ENCODE measurements at regions of chr1 and their contacts with region 1.

Region 1: DNA sequence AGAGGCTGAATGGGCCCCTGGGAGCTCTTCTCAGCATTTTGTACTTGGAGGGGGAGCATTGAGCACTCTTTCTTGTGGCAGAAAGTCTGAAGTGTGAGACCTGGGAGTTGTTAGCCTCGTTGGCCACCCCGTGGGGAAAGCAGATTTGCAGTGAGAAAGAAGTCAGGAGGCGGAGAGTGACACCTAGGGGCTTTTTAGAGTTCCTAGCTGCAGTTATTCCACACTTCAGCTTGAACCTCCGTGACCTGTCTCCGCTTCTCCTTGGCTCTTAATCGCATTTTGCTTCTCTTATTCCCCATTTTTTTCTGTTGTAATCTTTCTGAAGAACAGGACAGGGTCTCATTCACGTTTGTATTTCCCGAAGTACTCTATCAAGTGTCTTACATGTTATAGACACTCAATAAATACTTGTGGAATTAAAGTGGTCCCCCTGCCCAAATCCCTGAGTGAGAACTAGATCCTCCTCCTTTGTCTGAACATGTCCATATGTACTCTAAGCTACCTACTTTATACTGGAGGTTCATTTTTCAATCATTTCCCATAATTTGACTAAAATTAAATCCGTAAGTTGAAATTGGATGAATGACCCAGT is 14.5 kb upstream of the C1orf141 start:
- DNase-seq: peak; percentile 16 to 81 (median 62)
- ATAC-seq: peak; percentile 90
- H3K4me3 ChIP-seq: no peak overlapping the region
- H3K4me3 Mint-ChIP-seq: no peak overlapping the region
- H3K27ac ChIP-seq: no peak overlapping the region
- H3K27ac Mint-ChIP-seq: no peak overlapping the region
- H3K4me1 ChIP-seq: peaks cover 6% of the 10 kb centered on the region
- H3K4me1 Mint-ChIP-seq: peaks cover 23% of the 10 kb centered on the region
- H3K27me3 ChIP-seq: no peaks in the 10 kb centered on the region
- H3K27me3 Mint-ChIP-seq: peaks cover 7% of the 10 kb centered on the region
- CTCF ChIP-seq: peak; percentile 85

Region 2: DNA sequence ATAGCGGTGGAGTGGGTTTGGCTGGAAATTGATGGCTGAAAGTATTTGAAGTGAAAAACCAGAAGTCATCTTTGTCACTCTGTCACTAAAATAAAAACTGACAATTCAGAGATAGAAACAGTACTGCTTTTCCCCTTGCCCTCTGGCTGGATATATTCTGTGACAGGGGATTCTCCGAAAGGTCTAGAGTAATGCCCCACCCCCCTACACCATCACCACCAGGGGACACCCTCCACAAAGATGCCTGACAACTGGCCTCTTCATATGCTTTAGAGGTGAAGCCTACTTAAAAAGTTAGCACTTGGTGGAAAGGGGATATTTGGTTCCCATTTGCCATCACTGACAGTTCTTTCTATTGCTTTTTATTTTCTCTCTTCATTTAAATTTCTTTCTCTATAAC is 541.8 kb before region 1 on chr1:
- CTCF ChIA-PET with region 1: no interaction called
- POLR2A ChIA-PET with region 1: no interaction called
- intact Hi-C with region 1: no loop called
- DNase-seq: no peak
- ATAC-seq: no peak
- H3K4me3 ChIP-seq: no peak overlapping the region
- H3K4me3 Mint-ChIP-seq: no peak overlapping the region
- H3K27ac ChIP-seq: no peak overlapping the region
- H3K27ac Mint-ChIP-seq: no peak overlapping the region
- H3K4me1 ChIP-seq: no peaks in the 10 kb centered on the region
- H3K4me1 Mint-ChIP-seq: no peaks in the 10 kb centered on the region
- H3K27me3 ChIP-seq: no peaks in the 10 kb centered on the region
- H3K27me3 Mint-ChIP-seq: no peaks in the 10 kb centered on the region
- CTCF ChIP-seq: no peak

Region 3: GRCh38 chr1:66764994-66765578 is 384.2 kb before region 1 on chr1:
- CTCF ChIA-PET with region 1: interaction called, 90 read pairs
- POLR2A ChIA-PET with region 1: interaction called, 5 read pairs
- intact Hi-C with region 1: loop called (anchors 1 kb)
- DNase-seq: peak; percentile 5 to 73 (median 53)
- ATAC-seq: peak; percentile 83
- H3K4me3 ChIP-seq: no peak overlapping the region
- H3K4me3 Mint-ChIP-seq: no peak overlapping the region
- H3K27ac ChIP-seq: no peak overlapping the region
- H3K27ac Mint-ChIP-seq: no peak overlapping the region
- H3K4me1 ChIP-seq: no peaks in the 10 kb centered on the region
- H3K4me1 Mint-ChIP-seq: peaks cover 15% of the 10 kb centered on the region
- H3K27me3 ChIP-seq: no peaks in the 10 kb centered on the region
- H3K27me3 Mint-ChIP-seq: no peaks in the 10 kb centered on the region
- CTCF ChIP-seq: peak; percentile 84

Region 4: DNA sequence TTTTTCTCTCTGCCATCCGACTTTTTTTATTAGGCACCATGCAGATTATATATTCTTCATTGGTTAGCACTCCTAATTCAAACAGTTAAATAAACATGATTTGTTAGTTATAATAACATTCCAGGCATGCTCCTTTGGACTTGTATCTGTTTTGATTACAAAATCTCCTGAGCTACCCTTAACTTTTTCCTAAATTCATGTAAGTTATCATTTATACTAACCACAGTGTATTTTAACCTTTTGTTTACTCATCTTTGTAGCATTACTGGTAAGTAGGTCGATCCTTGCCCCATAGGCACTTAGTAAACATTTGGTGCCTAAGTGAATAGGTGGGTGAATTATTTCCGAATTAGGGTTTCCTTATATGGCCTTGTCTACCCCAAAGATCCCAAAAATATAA is 180.7 kb before region 1 on chr1:
- CTCF ChIA-PET with region 1: interaction called, 15 read pairs
- POLR2A ChIA-PET with region 1: no interaction called
- intact Hi-C with region 1: no loop called
- DNase-seq: no peak
- ATAC-seq: no peak
- H3K4me3 ChIP-seq: no peak overlapping the region
- H3K4me3 Mint-ChIP-seq: no peak overlapping the region
- H3K27ac ChIP-seq: no peak overlapping the region
- H3K27ac Mint-ChIP-seq: peak overlapping the region; percentile 8
- H3K4me1 ChIP-seq: no peaks in the 10 kb centered on the region
- H3K4me1 Mint-ChIP-seq: peaks cover 14% of the 10 kb centered on the region
- H3K27me3 ChIP-seq: no peaks in the 10 kb centered on the region
- H3K27me3 Mint-ChIP-seq: no peaks in the 10 kb centered on the region
- CTCF ChIP-seq: no peak

Region 5: DNA sequence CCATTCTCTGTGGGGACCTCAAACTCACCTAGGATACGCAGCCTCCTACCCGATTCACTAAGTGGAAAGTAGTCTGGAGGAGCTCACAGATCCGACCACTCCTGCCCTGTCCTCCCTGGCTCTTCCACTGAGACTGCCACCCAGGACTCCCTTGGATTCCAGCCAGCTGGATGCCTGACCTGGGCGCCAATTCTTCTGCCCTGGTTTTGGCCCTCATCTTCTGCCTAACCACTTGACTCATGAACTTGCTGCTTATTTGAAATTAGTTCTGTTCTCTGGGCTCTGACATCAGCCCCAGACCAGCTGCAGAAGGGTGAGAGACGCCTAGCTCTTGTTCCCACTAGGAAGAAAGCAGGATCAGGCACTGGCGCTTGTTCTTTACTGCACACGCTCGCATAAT is 144.2 kb before region 1 on chr1:
- CTCF ChIA-PET with region 1: interaction called, 48 read pairs
- POLR2A ChIA-PET with region 1: interaction called, 3 read pairs
- intact Hi-C with region 1: no loop called
- DNase-seq: no peak
- ATAC-seq: no peak
- H3K4me3 ChIP-seq: no peak overlapping the region
- H3K4me3 Mint-ChIP-seq: no peak overlapping the region
- H3K27ac ChIP-seq: no peak overlapping the region
- H3K27ac Mint-ChIP-seq: peak overlapping the region; percentile 37
- H3K4me1 ChIP-seq: no peaks in the 10 kb centered on the region
- H3K4me1 Mint-ChIP-seq: peaks cover 15% of the 10 kb centered on the region
- H3K27me3 ChIP-seq: no peaks in the 10 kb centered on the region
- H3K27me3 Mint-ChIP-seq: no peaks in the 10 kb centered on the region
- CTCF ChIP-seq: no peak

Region 6: GRCh38 chr1:67126111-67126746 is 23.0 kb before region 1 on chr1:
- CTCF ChIA-PET with region 1: interaction called, 10 read pairs
- POLR2A ChIA-PET with region 1: interaction called, 3 read pairs
- intact Hi-C with region 1: no loop called
- DNase-seq: no peak
- ATAC-seq: no peak
- H3K4me3 ChIP-seq: no peak overlapping the region
- H3K4me3 Mint-ChIP-seq: no peak overlapping the region
- H3K27ac ChIP-seq: no peak overlapping the region
- H3K27ac Mint-ChIP-seq: no peak overlapping the region
- H3K4me1 ChIP-seq: no peaks in the 10 kb centered on the region
- H3K4me1 Mint-ChIP-seq: no peaks in the 10 kb centered on the region
- H3K27me3 ChIP-seq: no peaks in the 10 kb centered on the region
- H3K27me3 Mint-ChIP-seq: no peaks in the 10 kb centered on the region
- CTCF ChIP-seq: no peak

Region 7: DNA sequence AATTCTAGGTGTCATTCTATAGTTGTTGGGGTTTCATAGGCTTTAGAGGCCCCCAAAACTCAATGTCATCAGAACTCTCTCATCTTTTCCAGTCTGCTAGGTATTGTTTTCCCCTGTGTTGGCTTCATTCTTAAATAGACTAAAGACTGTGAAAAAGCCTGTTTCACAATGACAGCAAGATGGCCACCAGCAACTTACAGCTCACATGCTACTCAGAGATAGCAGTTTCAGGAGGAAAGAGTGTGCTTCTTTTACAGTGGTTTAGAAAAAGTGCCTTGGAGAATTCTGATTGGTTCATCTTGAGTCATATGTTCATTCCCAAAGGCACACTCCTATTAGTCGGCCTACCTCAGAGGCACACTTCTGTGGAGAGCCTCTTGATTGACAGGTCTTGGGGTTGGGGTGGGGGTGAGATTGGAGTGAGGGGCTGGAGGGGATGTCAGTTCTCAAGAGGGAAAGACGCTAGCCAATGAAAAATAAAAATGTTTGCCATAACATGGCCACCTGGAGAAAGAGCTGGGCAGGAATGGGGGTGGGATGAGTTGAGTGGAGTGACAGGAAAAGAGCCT is 25.5 kb after region 1 on chr1:
- CTCF ChIA-PET with region 1: interaction called, 43 read pairs
- POLR2A ChIA-PET with region 1: interaction called, 5 read pairs
- intact Hi-C with region 1: no loop called
- DNase-seq: no peak
- ATAC-seq: no peak
- H3K4me3 ChIP-seq: no peak overlapping the region
- H3K4me3 Mint-ChIP-seq: no peak overlapping the region
- H3K27ac ChIP-seq: no peak overlapping the region
- H3K27ac Mint-ChIP-seq: no peak overlapping the region
- H3K4me1 ChIP-seq: peaks cover 35% of the 10 kb centered on the region
- H3K4me1 Mint-ChIP-seq: peaks cover 42% of the 10 kb centered on the region
- H3K27me3 ChIP-seq: no peaks in the 10 kb centered on the region
- H3K27me3 Mint-ChIP-seq: no peaks in the 10 kb centered on the region
- CTCF ChIP-seq: no peak

Region 8: GRCh38 chr1:67184838-67185421 is 35.7 kb after region 1 on chr1:
- CTCF ChIA-PET with region 1: no interaction called
- POLR2A ChIA-PET with region 1: no interaction called
- intact Hi-C with region 1: no loop called
- DNase-seq: no peak
- ATAC-seq: no peak
- H3K4me3 ChIP-seq: no peak overlapping the region
- H3K4me3 Mint-ChIP-seq: no peak overlapping the region
- H3K27ac ChIP-seq: no peak overlapping the region
- H3K27ac Mint-ChIP-seq: no peak overlapping the region
- H3K4me1 ChIP-seq: no peaks in the 10 kb centered on the region
- H3K4me1 Mint-ChIP-seq: peaks cover 1% of the 10 kb centered on the region
- H3K27me3 ChIP-seq: no peaks in the 10 kb centered on the region
- H3K27me3 Mint-ChIP-seq: peaks cover 2% of the 10 kb centered on the region
- CTCF ChIP-seq: no peak

Region 9: GRCh38 chr1:67500413-67500959 is 351.2 kb after region 1 on chr1:
- CTCF ChIA-PET with region 1: interaction called, 6 read pairs
- POLR2A ChIA-PET with region 1: interaction called, 6 read pairs
- intact Hi-C with region 1: loop called (anchors 2 to 5 kb)
- DNase-seq: peak; percentile 73 to 91 (median 81)
- ATAC-seq: peak; percentile 100
- H3K4me3 ChIP-seq: no peak overlapping the region
- H3K4me3 Mint-ChIP-seq: no peak overlapping the region
- H3K27ac ChIP-seq: no peak overlapping the region
- H3K27ac Mint-ChIP-seq: no peak overlapping the region
- H3K4me1 ChIP-seq: no peaks in the 10 kb centered on the region
- H3K4me1 Mint-ChIP-seq: peaks cover 4% of the 10 kb centered on the region
- H3K27me3 ChIP-seq: peaks cover 0 to 7% of the 10 kb centered on the region in 2 experiments
- H3K27me3 Mint-ChIP-seq: peaks cover 13% of the 10 kb centered on the region
- CTCF ChIP-seq: peak; percentile 95

Measured in CD8-positive, alpha-beta T cell (primary cell).